ENCODE measurements at regions of chr18 and their contacts with region 1.

Region 1: GRCh38 chr18:55300421-55300935 is 287.5 kb downstream of the TCF4 start:
- DNase-seq: no peak
- ATAC-seq: no peak
- H3K4me3 ChIP-seq: peak overlapping the region; percentile 18; the same call in 1 of the 2 replicates
- H3K27ac ChIP-seq: no peak overlapping the region
- H3K4me1 ChIP-seq: peaks cover 27% of the 10 kb centered on the region
- H3K27me3 ChIP-seq: no peaks in the 10 kb centered on the region
- CTCF ChIP-seq: no peak
- EP300 ChIP-seq: no peak
- POLR2A ChIP-seq: no peak
- RAD21 ChIP-seq: no peak

Region 2: GRCh38 chr18:55287149-55287806 is 13.2 kb before region 1 on chr18:
- CTCF ChIA-PET with region 1: interaction called, 5 read pairs
- POLR2A ChIA-PET with region 1: interaction called, 5 read pairs
- RAD21 ChIA-PET with region 1: interaction called, 4 read pairs
- SMC1A ChIA-PET with region 1: interaction called, 54 read pairs
- in situ Hi-C with region 1: no loop called
- intact Hi-C with region 1: loop called (anchors 2 kb)
- DNase-seq: no peak
- ATAC-seq: no peak
- H3K4me3 ChIP-seq: no peak overlapping the region
- H3K27ac ChIP-seq: no peak overlapping the region
- H3K4me1 ChIP-seq: 0 out of 2 replicates have a peak, but pooled peaks cover 3% of the 10 kb centered on the region
- H3K27me3 ChIP-seq: no peaks in the 10 kb centered on the region
- CTCF ChIP-seq: no peak
- EP300 ChIP-seq: no peak
- POLR2A ChIP-seq: no peak
- RAD21 ChIP-seq: no peak